ENCODE measurements at regions of chr16 and their contacts with region 1.

Region 1: DNA sequence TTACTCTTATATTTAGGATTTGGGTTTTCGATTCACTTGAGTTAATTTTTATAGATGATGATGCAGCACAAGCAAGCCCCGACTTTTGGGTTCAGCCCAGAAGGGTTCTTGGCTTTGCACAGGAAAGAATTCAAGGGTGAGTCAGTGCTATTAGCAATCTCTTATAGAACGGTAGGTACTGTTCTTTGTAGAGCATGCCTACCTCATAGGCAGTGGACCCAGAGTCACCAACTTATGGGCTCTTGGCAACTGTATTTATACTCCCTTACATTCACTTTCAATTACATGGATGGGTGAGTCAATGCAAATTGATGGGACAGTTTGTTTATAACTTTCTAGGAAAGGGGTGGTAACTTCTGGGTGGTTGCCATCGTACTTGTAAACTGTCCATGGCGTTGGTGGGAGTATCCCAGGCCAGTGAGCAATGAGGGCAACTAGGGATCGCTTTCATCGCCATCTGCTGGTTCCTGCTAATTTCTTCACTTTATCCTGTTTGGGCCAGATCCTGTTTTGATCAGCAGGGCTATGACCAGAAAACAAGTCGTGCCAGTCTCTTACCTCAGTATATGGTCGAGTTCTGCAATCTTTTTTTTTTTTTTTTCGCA is 362.6 kb downstream of the CNTNAP4 start:
- DNase-seq: peak; percentile 47
- H3K4me3 ChIP-seq: no peak overlapping the region
- H3K27ac ChIP-seq: no peak overlapping the region
- H3K4me1 ChIP-seq: no peaks in the 10 kb centered on the region
- H3K27me3 ChIP-seq: no peaks in the 10 kb centered on the region
- CTCF ChIP-seq: peak; percentile 27 to 38

Region 2: DNA sequence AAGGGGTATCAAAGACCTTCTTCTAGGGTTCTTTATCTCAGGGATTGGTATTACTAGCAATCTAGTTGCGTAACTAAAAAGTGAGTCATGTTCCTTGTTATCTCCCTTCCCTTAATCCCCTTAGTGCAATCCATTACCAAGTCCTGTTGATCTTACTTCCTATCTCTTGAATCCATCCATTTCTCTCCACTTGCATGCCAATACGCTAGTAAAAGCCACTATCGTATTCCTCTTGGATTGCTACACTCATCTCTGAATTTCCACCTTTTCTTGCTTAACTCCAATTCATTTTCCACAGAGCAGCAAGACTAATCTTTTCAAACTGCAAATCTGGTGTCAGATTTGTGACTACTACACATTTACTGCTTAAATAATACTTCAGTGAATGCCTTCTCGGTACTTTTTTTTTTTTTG is 1014.9 kb before region 1 on chr16:
- CTCF ChIA-PET with region 1: no interaction called
- dilution Hi-C with region 1: no loop called
- in situ Hi-C with region 1: no loop called
- intact Hi-C with region 1: no loop called
- DNase-seq: peak; percentile 5
- H3K4me3 ChIP-seq: no peak overlapping the region
- H3K27ac ChIP-seq: no peak overlapping the region
- H3K4me1 ChIP-seq: peaks cover 11% of the 10 kb centered on the region
- H3K27me3 ChIP-seq: no peaks in the 10 kb centered on the region
- CTCF ChIP-seq: no peak

Region 3: GRCh38 chr16:76278980-76279379 is 360.8 kb before region 1 on chr16:
- CTCF ChIA-PET with region 1: interaction called, 14 read pairs
- dilution Hi-C with region 1: no loop called
- in situ Hi-C with region 1: no loop called
- intact Hi-C with region 1: loop called (anchors 2 kb)
- DNase-seq: peak; percentile 7
- H3K4me3 ChIP-seq: no peak overlapping the region
- H3K27ac ChIP-seq: no peak overlapping the region
- H3K4me1 ChIP-seq: no peaks in the 10 kb centered on the region
- H3K27me3 ChIP-seq: peaks cover 4% of the 10 kb centered on the region
- CTCF ChIP-seq: peak; percentile 7 to 42

Region 4: DNA sequence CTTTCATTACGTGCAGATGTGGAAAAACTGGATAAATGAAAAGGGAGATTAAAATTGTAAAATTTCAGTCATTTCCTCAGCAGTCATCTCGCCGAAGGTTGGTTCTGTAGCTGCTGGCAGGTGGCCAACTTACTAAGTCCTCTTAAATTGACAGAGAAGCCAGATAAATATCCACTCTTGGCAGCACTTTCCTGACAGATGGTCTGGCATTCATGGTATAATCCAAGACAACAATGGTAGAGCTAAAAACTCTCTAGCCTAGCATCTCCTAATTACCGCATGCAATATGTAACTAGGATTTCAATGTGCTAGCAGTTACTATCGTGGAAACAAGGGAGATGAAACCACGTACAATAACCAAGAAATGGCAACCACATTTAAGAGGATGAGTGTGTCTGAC is 56.3 kb before region 1 on chr16:
- CTCF ChIA-PET with region 1: no interaction called
- dilution Hi-C with region 1: no loop called
- in situ Hi-C with region 1: no loop called
- intact Hi-C with region 1: no loop called
- DNase-seq: no peak
- H3K4me3 ChIP-seq: no peak overlapping the region
- H3K27ac ChIP-seq: no peak overlapping the region
- H3K4me1 ChIP-seq: no peaks in the 10 kb centered on the region
- H3K27me3 ChIP-seq: no peaks in the 10 kb centered on the region
- CTCF ChIP-seq: no peak

Region 5: DNA sequence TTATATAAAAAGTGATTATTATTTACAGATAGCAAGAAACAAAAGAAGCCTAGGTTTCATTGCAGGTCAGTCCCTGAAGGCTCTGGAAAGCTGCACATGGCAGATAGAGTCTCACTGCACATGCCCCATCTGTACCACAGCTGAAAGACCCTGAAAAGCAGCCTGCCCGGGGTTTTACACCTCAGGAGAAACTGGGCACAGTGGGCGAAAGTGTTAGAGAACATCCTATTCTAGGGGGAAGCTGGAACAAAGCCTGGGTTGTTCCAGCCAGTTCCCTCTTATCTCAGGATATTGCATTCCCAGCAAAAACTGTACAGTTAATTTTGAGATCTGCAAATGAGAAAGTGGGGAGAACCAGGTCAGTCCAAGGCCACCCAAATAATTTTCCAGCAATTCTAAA is 57.1 kb after region 1 on chr16:
- CTCF ChIA-PET with region 1: no interaction called
- dilution Hi-C with region 1: no loop called
- in situ Hi-C with region 1: no loop called
- intact Hi-C with region 1: no loop called
- DNase-seq: no peak
- H3K4me3 ChIP-seq: no peak overlapping the region
- H3K27ac ChIP-seq: no peak overlapping the region
- H3K4me1 ChIP-seq: no peaks in the 10 kb centered on the region
- H3K27me3 ChIP-seq: no peaks in the 10 kb centered on the region
- CTCF ChIP-seq: no peak

Region 6: DNA sequence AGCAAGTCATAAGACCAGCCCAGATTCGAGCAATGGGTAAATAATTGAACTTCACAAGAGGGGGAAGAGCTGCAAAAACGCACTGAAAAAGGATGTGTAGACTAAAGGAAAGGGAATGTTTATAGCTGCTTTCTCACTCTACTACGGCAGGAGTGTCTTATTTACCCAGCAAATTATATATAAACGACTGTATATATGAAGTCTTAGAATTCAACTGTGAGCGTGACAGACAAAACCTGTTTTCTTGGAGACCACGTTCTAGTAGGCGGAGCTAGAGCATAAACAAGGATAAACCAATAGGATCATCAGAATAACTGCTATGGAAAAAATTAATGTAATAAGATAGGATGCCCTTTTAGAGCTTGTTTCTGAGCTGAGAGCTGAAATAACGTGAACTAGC is 156.6 kb after region 1 on chr16:
- CTCF ChIA-PET with region 1: no interaction called
- dilution Hi-C with region 1: no loop called
- in situ Hi-C with region 1: no loop called
- intact Hi-C with region 1: no loop called
- DNase-seq: no peak
- H3K4me3 ChIP-seq: no peak overlapping the region
- H3K27ac ChIP-seq: no peak overlapping the region
- H3K4me1 ChIP-seq: peaks cover 12% of the 10 kb centered on the region
- H3K27me3 ChIP-seq: no peaks in the 10 kb centered on the region
- CTCF ChIP-seq: no peak

Measured in mammary epithelial cell (primary cell).